ENCODE measurements at regions of chr14 and their contacts with region 1.

Region 1: DNA sequence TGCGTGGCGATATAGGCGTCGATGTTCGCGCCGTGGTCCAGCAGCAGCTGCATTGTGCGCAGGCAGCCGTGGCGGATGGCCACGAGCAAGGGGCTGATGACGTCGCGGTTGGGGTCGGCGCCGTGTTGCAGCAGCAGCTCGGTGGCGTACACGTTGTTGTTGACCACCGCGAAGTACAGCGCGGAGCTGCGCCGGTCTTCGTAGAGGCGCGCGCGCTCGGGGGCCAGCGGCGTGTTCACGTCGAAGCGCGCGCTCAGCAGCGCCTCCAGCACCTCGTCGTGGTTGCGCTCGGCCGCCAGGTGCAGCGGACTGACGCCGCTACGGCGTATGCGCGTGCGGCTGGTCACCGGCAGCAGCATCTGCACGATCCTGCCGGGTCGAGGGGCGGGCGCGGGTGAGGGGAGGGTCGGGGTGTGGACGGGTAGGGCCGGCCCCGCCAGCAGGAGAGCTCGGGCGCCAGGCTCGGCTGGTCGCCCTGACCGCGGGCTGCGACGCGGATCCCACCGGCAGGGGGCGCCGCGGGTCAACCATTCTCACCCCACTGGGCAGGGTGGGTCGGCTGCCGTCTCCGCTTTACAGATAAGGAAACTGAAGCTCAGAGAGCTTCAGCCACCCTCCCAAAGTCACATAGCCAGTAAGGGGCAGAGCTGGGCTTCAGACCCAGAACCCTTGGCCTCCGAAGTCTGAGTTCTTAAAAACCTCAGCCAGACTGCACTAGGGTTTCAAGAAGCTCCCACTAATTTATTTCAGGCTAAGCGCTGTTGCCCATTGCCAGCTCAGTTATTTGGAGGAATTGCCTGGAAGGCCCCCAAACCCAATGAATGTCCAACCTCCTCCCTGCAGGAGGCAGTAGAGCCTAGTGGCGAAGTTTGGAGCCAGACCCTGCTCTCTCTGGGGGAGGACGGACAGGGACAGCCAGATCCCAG is 12.4 kb downstream of the FAM181A start:
- DNase-seq: peak; percentile 93
- ATAC-seq: peak; percentile 90
- H3K4me3 Mint-ChIP-seq: peak overlapping the region; percentile 57
- H3K27ac Mint-ChIP-seq: no peak overlapping the region
- H3K4me1 Mint-ChIP-seq: peaks cover 10% of the 10 kb centered on the region
- H3K27me3 Mint-ChIP-seq: peaks cover 30% of the 10 kb centered on the region
- CTCF ChIP-seq: peak; percentile 92

Region 2: GRCh38 chr14:93564918-93565317 is 374.6 kb before region 1 on chr14:
- CTCF ChIA-PET with region 1: no interaction called
- POLR2A ChIA-PET with region 1: no interaction called
- DNase-seq: no peak
- ATAC-seq: no peak
- H3K4me3 Mint-ChIP-seq: no peak overlapping the region
- H3K27ac Mint-ChIP-seq: no peak overlapping the region
- H3K4me1 Mint-ChIP-seq: peaks cover 32% of the 10 kb centered on the region
- H3K27me3 Mint-ChIP-seq: no peaks in the 10 kb centered on the region
- CTCF ChIP-seq: no peak

Region 3: DNA sequence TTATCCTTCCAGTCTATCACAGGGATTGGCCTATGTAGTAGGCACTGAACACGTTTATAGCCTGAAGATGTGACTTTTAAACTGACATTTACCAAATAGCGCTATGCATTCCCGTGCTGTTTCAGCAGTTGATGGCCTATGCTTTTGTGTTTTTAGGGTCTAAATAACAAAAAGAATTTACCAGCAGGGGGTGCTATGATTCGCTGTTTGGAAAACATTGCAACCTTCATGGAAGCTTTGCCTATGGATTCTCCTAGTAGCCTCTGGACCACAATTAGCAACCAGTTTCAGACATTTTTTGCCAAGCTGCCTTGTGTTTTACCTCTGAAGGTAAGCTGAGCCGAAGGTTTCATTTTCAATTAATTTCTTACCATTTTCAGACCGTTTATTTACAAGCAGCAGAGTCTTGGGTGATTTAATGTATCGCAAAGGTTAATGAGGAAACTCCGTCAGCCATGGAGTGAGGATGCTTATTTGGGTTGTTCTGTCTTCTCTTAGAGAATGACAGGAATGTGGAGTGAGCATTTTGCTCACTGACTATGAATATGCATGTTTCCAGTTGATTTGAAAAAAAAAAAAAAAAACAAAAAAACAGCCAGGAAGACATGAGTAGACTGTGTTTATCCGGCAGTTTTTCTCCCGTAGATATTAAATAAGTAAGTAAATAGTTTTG is 284.4 kb before region 1 on chr14:
- CTCF ChIA-PET with region 1: interaction called, 14 read pairs
- POLR2A ChIA-PET with region 1: no interaction called
- DNase-seq: peak; percentile 17
- ATAC-seq: peak; percentile 80
- H3K4me3 Mint-ChIP-seq: no peak overlapping the region
- H3K27ac Mint-ChIP-seq: peak overlapping the region; percentile 75; the same call in 1 of the 2 replicates
- H3K4me1 Mint-ChIP-seq: peaks cover 14% of the 10 kb centered on the region
- H3K27me3 Mint-ChIP-seq: no peaks in the 10 kb centered on the region
- CTCF ChIP-seq: peak; percentile 51

Region 4: DNA sequence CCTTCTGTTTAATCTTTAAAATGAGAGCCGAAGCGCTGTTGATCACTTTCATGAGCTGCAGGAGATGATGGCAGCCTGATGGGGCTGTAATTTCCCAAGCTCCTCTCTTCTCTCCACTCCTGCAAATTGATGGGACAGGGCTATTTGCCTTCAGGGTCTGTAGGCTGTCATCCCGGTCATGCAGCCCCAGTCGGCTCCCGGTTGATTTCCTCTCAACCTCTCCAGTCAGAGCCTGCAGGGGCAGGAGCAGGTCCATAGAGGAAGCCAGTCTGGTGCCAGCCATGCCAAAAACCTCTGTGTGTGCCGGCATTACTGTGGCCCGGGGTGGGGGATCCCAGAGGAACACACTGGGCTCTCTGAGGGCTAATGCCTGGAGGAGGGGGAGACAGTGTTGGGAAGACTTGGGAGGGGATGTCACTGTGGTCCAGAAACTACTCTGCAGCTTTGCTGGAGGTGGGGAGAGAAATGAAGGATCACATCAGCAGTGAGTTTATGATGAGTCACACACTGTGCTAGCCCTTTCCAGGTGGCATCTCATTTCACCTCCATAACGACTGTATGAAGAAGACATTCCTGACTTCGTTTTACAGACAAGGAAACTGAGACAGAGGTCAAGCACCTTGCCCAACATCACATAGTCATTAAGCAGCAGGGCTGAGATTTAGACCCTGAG is 104.7 kb before region 1 on chr14:
- CTCF ChIA-PET with region 1: no interaction called
- POLR2A ChIA-PET with region 1: no interaction called
- DNase-seq: no peak
- ATAC-seq: no peak
- H3K4me3 Mint-ChIP-seq: no peak overlapping the region
- H3K27ac Mint-ChIP-seq: no peak overlapping the region
- H3K4me1 Mint-ChIP-seq: peaks cover 4% of the 10 kb centered on the region
- H3K27me3 Mint-ChIP-seq: no peaks in the 10 kb centered on the region; the same call in 1 of the 2 replicates
- CTCF ChIP-seq: no peak

Region 5: DNA sequence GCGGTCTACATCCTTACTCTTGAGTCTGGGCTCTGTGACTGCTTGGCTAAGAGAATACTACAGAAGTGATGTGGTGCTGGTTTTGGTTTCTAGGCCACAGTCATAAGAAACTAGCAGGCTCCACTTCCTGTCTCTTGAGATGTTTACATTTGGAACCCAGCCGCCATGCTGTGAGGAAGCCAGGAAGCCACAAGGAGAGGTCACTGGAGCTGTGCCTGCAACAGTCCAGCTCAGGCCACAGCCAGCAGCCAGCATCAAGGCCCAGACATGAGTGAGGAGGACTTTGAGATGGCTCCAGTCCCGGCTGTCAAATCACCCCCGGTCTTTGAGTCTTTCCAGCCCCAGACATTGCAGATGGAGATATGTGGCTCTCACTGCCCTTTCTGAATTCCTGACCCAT is 25.3 kb before region 1 on chr14:
- CTCF ChIA-PET with region 1: interaction called, 20 read pairs
- POLR2A ChIA-PET with region 1: no interaction called
- DNase-seq: no peak
- ATAC-seq: no peak
- H3K4me3 Mint-ChIP-seq: no peak overlapping the region
- H3K27ac Mint-ChIP-seq: no peak overlapping the region
- H3K4me1 Mint-ChIP-seq: no peaks in the 10 kb centered on the region
- H3K27me3 Mint-ChIP-seq: no peaks in the 10 kb centered on the region; the same call in 1 of the 2 replicates
- CTCF ChIP-seq: no peak

Region 6: GRCh38 chr14:93970549-93970946 is 31.0 kb after region 1 on chr14:
- CTCF ChIA-PET with region 1: interaction called, 57 read pairs
- POLR2A ChIA-PET with region 1: no interaction called
- DNase-seq: no peak
- ATAC-seq: peak; percentile 87
- H3K4me3 Mint-ChIP-seq: no peak overlapping the region
- H3K27ac Mint-ChIP-seq: no peak overlapping the region
- H3K4me1 Mint-ChIP-seq: peaks cover 2% of the 10 kb centered on the region
- H3K27me3 Mint-ChIP-seq: no peaks in the 10 kb centered on the region
- CTCF ChIP-seq: no peak

Region 7: GRCh38 chr14:94009767-94010166 is 70.2 kb after region 1 on chr14:
- CTCF ChIA-PET with region 1: interaction called, 51 read pairs
- POLR2A ChIA-PET with region 1: no interaction called
- DNase-seq: no peak
- ATAC-seq: no peak
- H3K4me3 Mint-ChIP-seq: no peak overlapping the region
- H3K27ac Mint-ChIP-seq: no peak overlapping the region
- H3K4me1 Mint-ChIP-seq: no peaks in the 10 kb centered on the region
- H3K27me3 Mint-ChIP-seq: no peaks in the 10 kb centered on the region
- CTCF ChIP-seq: no peak

Region 8: DNA sequence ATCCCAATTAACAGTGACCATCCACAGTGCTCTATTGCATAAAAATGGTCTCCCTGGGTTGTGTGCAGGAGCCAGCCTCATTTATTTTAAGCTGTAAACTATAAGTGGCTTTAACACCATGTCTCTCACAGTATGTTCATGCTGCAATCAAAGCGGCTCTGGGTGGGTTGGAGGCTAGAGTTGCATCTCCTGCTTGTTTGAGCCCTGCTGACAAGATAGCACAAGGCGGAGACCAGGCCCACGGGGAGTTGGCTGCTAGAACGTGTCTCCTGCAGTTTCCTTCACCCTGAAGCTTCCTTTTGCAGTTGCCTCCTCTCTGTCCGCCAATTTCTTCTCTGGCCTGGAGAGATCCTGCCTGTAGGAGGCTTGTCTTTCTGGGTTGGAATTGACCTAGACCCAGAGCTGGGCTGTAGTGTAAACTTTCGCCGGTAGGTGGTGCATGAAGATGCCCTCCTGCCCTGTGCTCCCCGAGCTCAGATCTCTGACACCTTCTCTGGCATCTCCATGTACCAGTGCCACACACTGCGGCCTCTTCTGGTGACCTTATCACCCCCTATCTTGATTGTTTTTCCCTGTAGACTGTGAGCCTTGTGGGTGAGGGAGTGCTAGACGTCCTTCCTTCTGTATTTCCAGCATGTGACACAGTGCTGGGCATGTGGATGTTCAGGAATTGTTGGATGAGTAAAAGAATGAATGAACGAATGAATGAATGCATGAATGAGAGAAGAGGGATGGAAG is 96.9 kb after region 1 on chr14:
- CTCF ChIA-PET with region 1: interaction called, 50 read pairs
- POLR2A ChIA-PET with region 1: no interaction called
- DNase-seq: peak; percentile 85
- ATAC-seq: peak; percentile 98
- H3K4me3 Mint-ChIP-seq: no peak overlapping the region
- H3K27ac Mint-ChIP-seq: no peak overlapping the region
- H3K4me1 Mint-ChIP-seq: peaks cover 2% of the 10 kb centered on the region; the same call in 1 of the 2 replicates
- H3K27me3 Mint-ChIP-seq: no peaks in the 10 kb centered on the region
- CTCF ChIP-seq: peak; percentile 77

Region 9: DNA sequence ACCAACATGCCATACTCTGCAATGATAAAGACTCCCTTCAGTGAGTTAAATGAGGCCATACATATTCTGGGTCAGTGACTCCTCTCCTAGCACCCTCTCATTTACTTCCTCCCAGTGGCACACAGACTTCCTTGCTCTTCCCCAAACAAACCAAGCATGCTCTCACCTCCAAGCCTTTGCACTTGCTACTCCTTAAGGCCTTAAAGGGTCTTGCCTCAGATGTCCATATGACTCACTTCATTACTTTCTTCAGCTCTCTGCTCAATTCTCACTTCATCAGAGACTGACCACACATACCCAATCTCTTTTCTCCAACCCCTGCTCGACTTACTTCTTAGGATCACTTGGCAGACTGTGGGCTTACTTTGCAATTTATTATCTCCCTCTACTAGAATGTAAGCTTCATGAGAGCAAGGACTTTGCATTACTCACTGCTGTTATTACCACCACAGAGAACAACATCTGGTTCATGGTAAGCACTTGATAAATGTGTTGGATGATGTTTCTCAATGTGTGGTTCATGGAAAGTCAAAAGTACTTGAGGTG is 118.6 kb after region 1 on chr14:
- CTCF ChIA-PET with region 1: no interaction called
- POLR2A ChIA-PET with region 1: no interaction called
- DNase-seq: no peak
- ATAC-seq: no peak
- H3K4me3 Mint-ChIP-seq: no peak overlapping the region
- H3K27ac Mint-ChIP-seq: no peak overlapping the region
- H3K4me1 Mint-ChIP-seq: peaks cover 11% of the 10 kb centered on the region
- H3K27me3 Mint-ChIP-seq: no peaks in the 10 kb centered on the region
- CTCF ChIP-seq: no peak

Region 10: DNA sequence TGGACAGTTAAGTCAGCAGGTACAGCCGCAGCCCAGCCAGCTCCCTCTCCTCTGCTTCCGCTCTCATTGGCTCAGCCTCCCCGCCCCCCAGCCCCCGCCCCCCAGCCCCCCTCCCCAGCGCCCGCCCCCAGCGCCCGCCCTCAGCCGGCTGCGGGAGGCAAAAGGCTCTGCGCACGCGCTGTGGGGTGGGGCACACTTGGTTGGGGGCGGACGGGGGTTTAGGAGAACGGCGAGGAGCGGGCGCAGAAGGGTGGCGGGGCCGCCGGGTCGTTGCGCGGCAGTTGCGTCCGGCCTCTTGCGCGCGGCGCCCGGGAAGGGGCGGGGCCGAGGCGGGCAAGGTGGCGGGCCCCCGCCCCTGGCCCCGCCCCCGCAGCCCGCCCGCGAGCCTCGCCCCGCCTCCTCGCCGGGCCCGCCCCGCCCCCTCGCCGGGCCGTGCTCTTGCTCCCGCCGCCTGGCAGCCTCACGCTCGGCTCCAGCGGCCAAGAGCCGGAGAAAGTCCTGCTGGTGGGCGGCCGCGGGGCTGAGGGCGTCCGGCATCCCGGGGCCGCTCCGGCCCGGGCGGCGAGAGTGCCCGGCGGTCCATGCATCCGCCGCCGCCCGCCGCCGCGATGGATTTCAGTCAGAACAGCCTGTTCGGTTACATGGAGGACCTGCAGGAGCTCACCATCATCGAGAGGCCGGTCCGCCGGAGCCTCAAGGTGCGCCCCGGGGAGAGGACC is 234.5 kb after region 1 on chr14 and contains the start of gene PPP4R4:
- CTCF ChIA-PET with region 1: interaction called, 11 read pairs
- POLR2A ChIA-PET with region 1: no interaction called
- DNase-seq: peak; percentile 98
- ATAC-seq: peak; percentile 89
- H3K4me3 Mint-ChIP-seq: peak within 1 kb of the TSS; percentile 88
- H3K27ac Mint-ChIP-seq: peak within 1 kb of the TSS; percentile 60
- H3K4me1 Mint-ChIP-seq: peaks cover 30% of the 10 kb centered on the region
- H3K27me3 Mint-ChIP-seq: peaks cover 50% of the 10 kb centered on the region
- CTCF ChIP-seq: no peak
- total RNA-seq, gene PPP4R4: 8.1 to 9.6 TPM (median 8.2 TPM) in 3 replicates

Measured in WTC11 (cell line).